GM12878 (cell line): ENCODE measurements at regions of chr16 and their contacts with region 1.

Region 1: GRCh38 chr16:53220585-53220984 is 165.8 kb downstream of the CHD9 start:
- DNase-seq: no peak
- ATAC-seq: peak; percentile 81
- H3K4me3 ChIP-seq: no peak overlapping the region
- H3K27ac ChIP-seq: peak overlapping the region; percentile 38; the same call in 1 of the 2 replicates
- H3K4me1 ChIP-seq: peaks cover 18% of the 10 kb centered on the region; the same call in 1 of the 2 replicates
- H3K27me3 ChIP-seq: no peaks in the 10 kb centered on the region
- CTCF ChIP-seq: peak; percentile 25 to 40 (median 38); a peak in 3 of 6 replicates
- EP300 ChIP-seq: no peak
- POLR2A ChIP-seq: no peak
- RAD21 ChIP-seq: peak; percentile 57

Region 2: DNA sequence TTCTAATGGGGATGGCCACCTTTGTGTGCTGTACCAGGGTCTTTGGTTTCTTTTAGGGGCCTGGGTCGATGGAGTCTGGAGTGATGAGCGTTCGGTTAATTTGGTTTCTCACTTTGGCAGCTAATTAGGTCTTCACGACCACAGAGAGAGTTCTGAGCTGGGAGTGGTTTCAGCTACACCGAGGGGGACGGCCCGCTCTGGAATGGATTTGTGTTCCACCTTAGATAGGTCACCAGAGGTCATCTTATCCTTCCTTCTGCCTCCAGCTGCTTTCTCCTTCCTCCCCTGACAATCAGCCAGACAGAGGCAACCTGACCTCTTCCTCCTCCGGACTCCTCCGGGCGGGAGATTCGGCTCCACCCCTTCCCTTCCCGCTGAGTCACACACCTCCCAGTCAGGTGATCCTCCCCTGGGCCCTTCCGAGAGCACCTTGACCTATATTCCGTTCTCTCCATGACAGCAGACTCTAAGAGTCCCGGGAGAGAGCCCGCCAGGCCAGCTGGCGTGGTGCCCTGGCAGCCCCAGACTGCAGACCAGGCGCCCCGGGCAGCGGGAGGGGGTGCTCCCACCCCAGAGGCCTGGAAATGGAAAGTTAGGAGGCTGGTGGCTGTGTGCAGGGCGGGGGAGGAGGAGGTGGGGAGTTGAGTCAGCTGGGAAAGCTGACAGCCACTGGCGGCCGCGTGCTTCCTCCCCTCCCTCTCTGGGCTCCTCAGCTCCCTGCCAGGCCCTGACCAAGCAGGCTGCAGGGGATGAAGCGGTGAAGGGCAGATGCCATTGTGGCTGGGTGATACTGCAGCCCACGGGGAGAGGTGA is 121.1 kb before region 1 on chr16:
- CTCF ChIA-PET with region 1: no interaction called
- POLR2A ChIA-PET with region 1: no interaction called
- RAD21 ChIA-PET with region 1: no interaction called
- SMC1A ChIA-PET with region 1: no interaction called
- in situ Hi-C with region 1: no loop called
- intact Hi-C with region 1: no loop called
- DNase-seq: peak; percentile 68
- ATAC-seq: peak; percentile 75
- H3K4me3 ChIP-seq: peak overlapping the region; percentile 79
- H3K27ac ChIP-seq: peak overlapping the region; percentile 96
- H3K4me1 ChIP-seq: peaks cover 25% of the 10 kb centered on the region
- H3K27me3 ChIP-seq: no peaks in the 10 kb centered on the region
- CTCF ChIP-seq: no peak
- EP300 ChIP-seq: peak; percentile 7 to 55; a peak in 1 of 4 replicates
- POLR2A ChIP-seq: peak; percentile 50
- RAD21 ChIP-seq: no peak

Region 3: DNA sequence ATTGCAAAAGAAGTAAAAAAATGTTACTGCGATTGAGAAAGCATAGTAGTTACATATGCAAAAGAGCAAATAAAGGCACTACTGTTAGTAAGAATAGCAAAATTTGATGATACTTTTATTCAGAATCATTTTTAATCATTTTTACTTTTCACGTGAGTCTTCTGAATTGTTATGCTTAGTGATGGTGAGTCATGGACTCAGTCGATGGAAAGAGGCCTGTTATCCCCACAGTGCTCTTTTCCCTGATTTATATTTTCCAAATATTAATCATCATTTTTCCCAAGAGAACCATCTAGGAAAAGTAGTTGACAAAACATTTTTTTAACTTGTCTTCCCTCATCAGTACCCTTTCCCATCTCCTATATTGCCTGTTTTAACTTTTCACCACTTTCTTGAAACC is 15.3 kb after region 1 on chr16:
- CTCF ChIA-PET with region 1: interaction called, 4 read pairs
- POLR2A ChIA-PET with region 1: no interaction called
- RAD21 ChIA-PET with region 1: no interaction called
- SMC1A ChIA-PET with region 1: no interaction called
- in situ Hi-C with region 1: no loop called
- intact Hi-C with region 1: loop called (anchors 2 kb)
- DNase-seq: no peak
- ATAC-seq: no peak
- H3K4me3 ChIP-seq: no peak overlapping the region
- H3K27ac ChIP-seq: no peak overlapping the region
- H3K4me1 ChIP-seq: no peaks in the 10 kb centered on the region
- H3K27me3 ChIP-seq: no peaks in the 10 kb centered on the region
- CTCF ChIP-seq: no peak
- EP300 ChIP-seq: no peak
- POLR2A ChIP-seq: no peak
- RAD21 ChIP-seq: no peak

Region 4: GRCh38 chr16:53611179-53611696 is 390.7 kb after region 1 on chr16:
- CTCF ChIA-PET with region 1: no interaction called
- POLR2A ChIA-PET with region 1: no interaction called
- RAD21 ChIA-PET with region 1: no interaction called
- SMC1A ChIA-PET with region 1: no interaction called
- in situ Hi-C with region 1: no loop called
- intact Hi-C with region 1: no loop called
- DNase-seq: no peak
- ATAC-seq: no peak
- H3K4me3 ChIP-seq: no peak overlapping the region
- H3K27ac ChIP-seq: no peak overlapping the region
- H3K4me1 ChIP-seq: no peaks in the 10 kb centered on the region
- H3K27me3 ChIP-seq: no peaks in the 10 kb centered on the region
- CTCF ChIP-seq: no peak
- EP300 ChIP-seq: no peak
- POLR2A ChIP-seq: no peak
- RAD21 ChIP-seq: no peak